ENCODE measurements at regions of chr6 and their contacts with region 1.

Region 1: DNA sequence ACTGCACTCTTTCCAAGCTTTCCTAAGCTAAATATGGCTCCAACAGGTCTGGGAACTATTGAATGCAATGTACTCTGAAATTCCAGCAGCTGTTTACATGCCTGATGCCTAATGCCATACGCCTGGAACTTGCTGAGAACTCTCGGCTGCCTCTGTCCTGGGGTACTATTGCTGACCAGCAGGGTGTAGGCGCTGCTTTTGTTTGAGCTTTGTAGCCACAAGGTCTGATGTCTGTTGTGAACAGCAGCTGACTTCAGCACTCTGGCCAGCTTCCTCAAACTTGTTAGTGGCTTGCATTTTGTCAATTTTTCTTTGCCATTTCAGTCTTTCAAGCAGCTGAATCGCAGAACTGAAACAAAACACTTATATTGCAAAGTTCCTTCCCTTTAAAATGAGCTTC is 26.7 kb downstream of the SAYSD1 start:
- DNase-seq: no peak
- ATAC-seq: peak; percentile 82

Region 2: GRCh38 chr6:38646166-38646878 is 442.0 kb before region 1 on chr6:
- intact Hi-C with region 1: no loop called
- DNase-seq: no peak
- ATAC-seq: no peak

Region 3: GRCh38 chr6:38973178-38974054 is 114.9 kb before region 1 on chr6:
- intact Hi-C with region 1: loop called (anchors 10 kb)
- DNase-seq: no peak
- ATAC-seq: peak; percentile 79

Region 4: DNA sequence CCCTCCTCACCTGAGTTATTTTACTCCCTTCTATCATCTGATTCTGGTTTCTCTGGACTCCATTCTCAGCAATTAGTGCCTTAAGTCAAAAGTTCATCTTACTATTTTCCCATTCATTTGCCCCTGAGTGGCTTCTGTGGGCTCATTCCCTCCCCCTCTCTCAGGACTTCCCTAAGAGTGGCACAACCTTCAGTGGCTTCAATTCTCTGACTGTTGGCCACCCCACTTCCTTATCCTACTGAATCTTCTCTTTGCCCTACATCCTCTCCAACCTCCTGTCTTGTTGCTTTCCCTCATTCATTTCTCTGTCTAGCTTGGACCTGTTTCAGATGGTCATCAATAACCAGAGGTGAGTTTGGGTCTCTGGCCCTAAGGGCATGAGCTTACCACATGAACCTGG is 100.8 kb before region 1 on chr6:
- intact Hi-C with region 1: no loop called
- DNase-seq: no peak
- ATAC-seq: no peak

Region 5: DNA sequence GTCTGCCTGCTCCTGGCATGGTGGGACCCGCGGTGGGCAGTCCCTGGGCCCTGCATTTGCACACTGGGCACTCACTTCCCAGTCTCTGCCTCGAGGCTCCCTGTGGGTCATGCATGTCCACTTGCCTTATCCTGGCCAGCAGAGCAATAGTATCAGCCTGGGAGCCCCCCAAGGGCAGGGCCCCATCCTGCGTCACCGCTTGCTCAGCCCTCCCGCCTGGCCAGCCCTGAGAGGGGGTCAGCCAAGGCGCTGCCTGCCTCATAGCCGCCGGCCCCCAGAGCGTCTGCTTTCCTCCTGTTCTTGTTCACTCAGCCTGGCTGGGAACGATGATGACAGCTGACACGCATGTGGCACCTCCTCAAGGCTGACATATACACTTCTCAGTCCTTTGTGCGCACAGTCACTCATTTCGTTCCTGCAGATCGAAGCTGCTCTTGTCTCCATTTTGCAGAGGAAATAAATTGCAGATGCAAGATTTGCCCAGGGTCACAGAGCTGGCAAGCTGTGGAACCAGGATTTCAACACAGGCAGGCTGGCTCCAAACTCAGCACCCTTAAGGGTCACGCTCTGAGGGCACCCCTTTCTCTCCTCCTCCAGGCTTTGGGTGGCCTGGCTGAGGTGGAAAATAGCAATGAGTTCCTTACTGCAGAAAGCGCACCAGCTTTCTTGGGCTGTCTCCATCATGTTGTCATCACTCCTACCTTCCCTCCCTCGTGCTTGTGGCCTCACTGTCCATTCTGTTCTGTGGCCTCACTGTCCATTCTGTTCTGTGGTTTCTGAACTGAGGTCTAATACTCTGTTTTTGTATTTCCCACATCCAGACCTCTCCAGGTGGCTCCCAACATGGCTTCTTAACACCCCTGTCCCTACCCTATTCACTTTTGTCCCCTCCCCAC is 208.7 kb after region 1 on chr6:
- intact Hi-C with region 1: loop called (anchors 10 kb)
- DNase-seq: peak; percentile 84
- ATAC-seq: peak; percentile 79

Measured in Right ventricle myocardium superior (tissue), 1 donor.